HepG2 (cell line): ENCODE measurements at regions of chr5 and their contacts with region 1.

Region 1: DNA sequence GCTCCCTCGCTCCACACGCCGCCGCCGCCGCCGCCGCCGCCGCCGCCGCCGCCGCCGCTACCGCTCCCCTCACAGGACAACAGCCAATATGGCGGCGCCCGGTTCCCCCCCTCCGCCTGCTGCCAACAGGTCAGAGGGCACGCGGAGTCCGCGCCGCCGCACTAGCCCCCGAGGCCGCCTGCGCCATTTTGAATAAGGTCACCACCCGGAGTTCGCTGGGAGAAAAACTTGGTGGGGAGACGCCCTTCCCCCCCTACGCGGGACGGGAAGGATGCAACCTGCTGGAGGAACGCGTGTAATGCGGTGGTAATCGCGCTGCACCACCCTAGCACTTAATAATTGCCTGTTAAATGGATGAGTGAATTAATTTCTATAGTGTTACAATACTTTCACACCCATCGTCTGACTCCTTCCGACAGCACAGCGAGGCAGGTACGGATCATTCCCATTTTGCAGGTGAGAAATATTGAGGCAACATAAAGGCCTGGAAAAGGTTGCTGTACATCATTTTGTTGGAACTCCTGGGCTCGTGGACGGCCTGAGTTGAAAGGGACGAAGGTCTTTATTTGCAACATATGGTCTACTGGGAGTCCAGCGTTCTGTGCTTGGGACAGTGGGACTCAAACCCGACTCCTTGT is at the start of gene FAM193B:
- DNase-seq: peak; percentile 85
- ATAC-seq: peak; percentile 78
- H3K4me3 ChIP-seq: peak within 1 kb of the TSS; percentile 96 to 98 (median 98)
- H3K27ac ChIP-seq: peak within 1 kb of the TSS; percentile 56
- H3K4me1 ChIP-seq: peaks cover 59% of the 10 kb centered on the region
- H3K27me3 ChIP-seq: no peaks in the 10 kb centered on the region
- CTCF ChIP-seq: peak; percentile 45
- EP300 ChIP-seq: no peak
- POLR2A ChIP-seq: no peak
- RAD21 ChIP-seq: no peak
- total RNA-seq, gene FAM193B: 6.4 and 21.2 TPM in 2 replicates

Region 2: DNA sequence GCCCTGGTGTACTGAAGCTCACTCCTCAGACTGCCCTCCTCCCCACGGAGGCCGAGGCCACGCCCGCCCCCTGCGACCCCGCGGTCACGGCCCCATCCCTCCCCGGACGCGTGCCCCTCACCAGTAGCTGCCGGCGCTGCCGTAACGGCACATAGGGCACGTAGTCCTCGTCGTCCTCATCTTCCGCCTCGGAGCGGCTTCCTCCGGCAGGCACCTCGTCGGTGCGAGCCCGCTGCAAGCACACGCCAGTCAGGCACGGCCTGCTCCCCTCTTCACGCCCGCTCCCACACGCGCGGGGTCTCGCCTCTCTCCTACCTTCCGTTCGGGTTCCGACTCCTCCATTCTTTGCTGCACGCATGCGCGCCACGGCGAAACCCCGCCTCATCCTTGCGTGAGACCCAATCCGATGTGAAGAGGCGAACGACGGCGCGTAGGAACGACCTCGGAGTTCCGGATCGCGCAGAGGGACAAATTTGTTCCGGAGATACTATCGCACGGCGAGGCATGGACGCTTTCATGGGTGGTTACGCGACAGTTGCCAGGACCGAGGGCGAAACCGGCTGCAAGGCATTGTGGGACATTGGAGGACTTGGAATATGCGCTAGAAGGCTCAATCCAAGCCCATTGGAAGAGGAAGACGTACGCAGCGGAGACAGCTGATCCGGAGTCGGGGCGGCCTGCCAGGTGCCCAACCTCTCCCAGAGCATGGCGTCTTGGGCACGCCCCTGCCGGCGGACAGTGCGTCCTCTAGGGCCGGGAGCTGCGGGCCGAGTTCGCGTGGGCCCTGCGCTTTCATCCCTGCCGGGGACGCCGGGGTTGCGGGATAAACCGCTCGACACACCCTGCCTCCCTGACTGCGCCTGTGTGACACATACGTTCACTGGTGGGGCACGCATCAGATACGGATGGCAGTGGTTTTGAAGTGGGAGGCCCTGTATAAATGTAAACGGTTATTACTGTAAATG is 37.7 kb before region 1 on chr5 and contains the start of gene DDX41:
- CTCF ChIA-PET with region 1: no interaction called
- POLR2A ChIA-PET with region 1: interaction called, 3 read pairs
- in situ Hi-C with region 1: no loop called
- intact Hi-C with region 1: loop called (anchors 5 kb)
- DNase-seq: peak; percentile 96
- ATAC-seq: peak; percentile 88
- H3K4me3 ChIP-seq: peak within 1 kb of the TSS; percentile 70 to 96 (median 86)
- H3K27ac ChIP-seq: peak within 1 kb of the TSS; percentile 62
- H3K4me1 ChIP-seq: peaks cover 26% of the 10 kb centered on the region
- H3K27me3 ChIP-seq: no peaks in the 10 kb centered on the region; a peak in 1 of 5 replicates
- CTCF ChIP-seq: peak; percentile 21; the same call in 1 of the 2 replicates
- EP300 ChIP-seq: peak in 1 of 2 experiments; percentile 17; a peak in 1 of 4 replicates
- POLR2A ChIP-seq: peak in 1 of 2 experiments; percentile 48; a peak in 1 of 4 replicates
- RAD21 ChIP-seq: peak; percentile 48; the same call in 1 of the 2 replicates
- total RNA-seq, gene DDX41: 62.8 and 83.0 TPM in 2 replicates

Region 3: GRCh38 chr5:177592010-177592834 is 37.6 kb after region 1 on chr5 and contains the start of gene TMED9:
- CTCF ChIA-PET with region 1: no interaction called
- POLR2A ChIA-PET with region 1: interaction called, 4 read pairs
- in situ Hi-C with region 1: no loop called
- intact Hi-C with region 1: loop called (anchors 2 kb)
- DNase-seq: peak; percentile 71
- ATAC-seq: peak; percentile 95
- H3K4me3 ChIP-seq: peak within 1 kb of the TSS; percentile 93 to 97 (median 95)
- H3K27ac ChIP-seq: peak within 1 kb of the TSS; percentile 74
- H3K4me1 ChIP-seq: peaks cover 41% of the 10 kb centered on the region
- H3K27me3 ChIP-seq: no peaks in the 10 kb centered on the region; a peak in 1 of 5 replicates
- CTCF ChIP-seq: peak; percentile 18; the same call in 1 of the 2 replicates
- EP300 ChIP-seq: no peak
- POLR2A ChIP-seq: peak; percentile 94 to 97
- RAD21 ChIP-seq: no peak; the same call in 1 of the 2 replicates
- total RNA-seq, gene TMED9: 92.1 and 161 TPM in 2 replicates